Mammary epithelial cell (primary cell): ENCODE measurements at regions of chr1 and their contacts with region 1.

Region 1: GRCh38 chr1:171313835-171314320 is at the start of gene FMO4:
- DNase-seq: peak; percentile 96
- H3K4me3 ChIP-seq: peak within 1 kb of the TSS; percentile 29 to 32 (median 30)
- H3K27ac ChIP-seq: peak within 1 kb of the TSS; percentile 83
- H3K4me1 ChIP-seq: peaks cover 3% of the 10 kb centered on the region
- H3K27me3 ChIP-seq: no peaks in the 10 kb centered on the region
- CTCF ChIP-seq: peak; percentile 74 to 86
- total RNA-seq, gene FMO4: 1.8 to 7.0 TPM

Region 2: DNA sequence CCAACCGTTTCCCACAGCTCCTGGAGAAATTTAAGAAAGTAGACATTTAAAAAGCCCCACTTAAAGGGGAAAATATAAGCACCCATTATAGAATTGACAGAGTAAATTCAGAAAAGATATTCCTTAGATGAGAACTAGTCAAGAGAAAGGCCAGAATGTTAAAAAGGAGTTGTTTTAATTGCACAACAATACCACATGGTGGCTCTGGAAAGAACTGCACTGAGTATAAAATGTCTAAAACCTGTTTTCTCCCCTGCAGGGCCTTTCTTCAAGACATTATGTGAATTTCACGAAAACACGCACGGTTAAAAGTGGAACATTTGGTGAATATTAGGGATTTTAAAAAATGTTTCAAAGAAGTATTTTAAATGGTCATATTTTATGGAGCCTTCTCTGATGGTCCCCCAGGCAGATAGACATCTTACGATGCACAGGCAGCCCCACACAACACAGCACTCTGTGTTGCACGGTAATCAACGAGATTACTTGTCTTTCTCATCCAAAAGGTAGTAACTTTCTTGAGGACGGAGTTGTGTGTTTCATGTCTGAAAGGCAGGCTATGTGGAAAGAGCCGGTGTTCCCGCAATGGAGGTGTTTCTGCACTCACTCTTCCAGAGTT is 548.1 kb before region 1 on chr1:
- CTCF ChIA-PET with region 1: no interaction called
- dilution Hi-C with region 1: no loop called
- in situ Hi-C with region 1: no loop called
- intact Hi-C with region 1: no loop called
- DNase-seq: peak; percentile 8
- H3K4me3 ChIP-seq: no peak overlapping the region
- H3K27ac ChIP-seq: no peak overlapping the region
- H3K4me1 ChIP-seq: no peaks in the 10 kb centered on the region
- H3K27me3 ChIP-seq: no peaks in the 10 kb centered on the region
- CTCF ChIP-seq: peak; percentile 51 to 66

Region 3: DNA sequence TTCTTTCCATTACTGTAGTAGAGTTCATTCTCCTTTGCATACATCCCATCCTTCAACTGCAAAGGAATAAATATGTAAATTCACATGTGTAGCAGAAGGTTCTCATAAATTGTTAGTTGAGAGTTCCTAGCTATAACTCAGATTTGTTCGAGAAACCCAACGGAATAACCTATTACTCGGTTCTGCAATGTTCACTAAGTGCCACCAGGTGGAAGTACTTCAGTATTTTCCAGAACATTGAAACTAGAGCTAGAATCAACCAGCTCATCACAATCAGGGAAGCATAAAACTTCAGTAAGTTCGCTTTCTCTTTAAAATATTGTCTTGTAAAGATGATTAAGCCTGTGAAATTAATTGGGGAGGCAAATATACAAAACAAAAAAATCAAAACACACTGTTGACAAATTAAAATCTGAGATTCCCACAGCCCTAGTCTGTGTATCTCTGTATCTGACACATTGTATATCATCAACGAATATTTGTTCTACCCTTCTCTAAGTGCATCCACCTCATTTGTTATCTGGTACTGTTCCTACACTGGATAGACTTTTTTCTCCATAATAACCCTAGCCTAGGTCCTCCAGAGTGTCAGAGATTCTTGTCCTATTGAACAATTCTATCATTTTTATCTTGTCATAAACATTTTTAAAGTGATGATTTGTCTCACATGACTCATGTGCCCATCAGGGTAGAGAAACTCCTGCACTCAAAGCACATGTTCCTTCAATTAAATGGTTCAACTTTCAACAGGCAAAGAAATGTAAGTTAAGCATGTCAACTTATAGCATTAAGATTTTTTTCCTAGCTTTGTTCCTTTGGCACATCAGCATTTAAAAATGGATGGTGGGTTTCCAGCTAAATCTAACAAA is 346.6 kb before region 1 on chr1:
- CTCF ChIA-PET with region 1: interaction called, 13 read pairs
- dilution Hi-C with region 1: no loop called
- in situ Hi-C with region 1: no loop called
- intact Hi-C with region 1: loop called (anchors 2 kb)
- DNase-seq: peak; percentile 11
- H3K4me3 ChIP-seq: no peak overlapping the region
- H3K27ac ChIP-seq: no peak overlapping the region
- H3K4me1 ChIP-seq: peaks cover 18% of the 10 kb centered on the region
- H3K27me3 ChIP-seq: no peaks in the 10 kb centered on the region
- CTCF ChIP-seq: peak; percentile 54 to 67

Region 4: GRCh38 chr1:171173069-171173468 is 140.8 kb before region 1 on chr1:
- CTCF ChIA-PET with region 1: interaction called, 6 read pairs
- dilution Hi-C with region 1: no loop called
- in situ Hi-C with region 1: no loop called
- intact Hi-C with region 1: loop called (anchors 1 kb)
- DNase-seq: no peak
- H3K4me3 ChIP-seq: no peak overlapping the region
- H3K27ac ChIP-seq: no peak overlapping the region
- H3K4me1 ChIP-seq: no peaks in the 10 kb centered on the region
- H3K27me3 ChIP-seq: no peaks in the 10 kb centered on the region
- CTCF ChIP-seq: no peak

Region 5: DNA sequence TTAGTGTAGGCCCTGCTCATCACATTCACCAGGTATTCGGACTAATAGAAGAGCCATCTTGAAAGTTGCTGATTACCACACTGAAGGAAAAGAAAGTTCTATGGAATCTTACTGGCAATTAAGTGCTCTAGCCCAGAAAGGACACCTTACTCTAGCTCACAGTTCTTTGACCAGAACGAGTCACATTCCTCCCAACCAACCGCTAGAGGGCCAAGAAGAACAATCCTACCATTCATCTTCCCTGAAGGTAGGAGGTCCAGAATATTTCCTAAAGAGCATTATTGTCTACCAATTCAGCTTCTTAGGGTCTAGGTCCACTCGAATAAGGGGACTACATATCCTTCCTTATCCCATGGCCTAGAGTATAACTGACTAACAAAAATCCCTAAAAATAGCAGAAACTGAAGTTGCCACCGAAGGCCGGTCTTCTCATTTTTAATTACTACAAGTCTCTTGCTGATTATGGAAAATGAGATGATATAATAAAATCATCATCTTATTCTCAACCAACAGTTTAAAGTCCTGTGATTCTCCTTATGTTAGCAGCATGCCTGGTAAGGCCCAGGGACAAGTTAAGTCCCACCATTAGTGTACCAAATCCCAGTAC is 68.3 kb before region 1 on chr1:
- CTCF ChIA-PET with region 1: interaction called, 31 read pairs
- dilution Hi-C with region 1: no loop called
- in situ Hi-C with region 1: loop called in 1 of 2 experiments (anchors 10 kb)
- intact Hi-C with region 1: loop called (anchors 1 kb)
- DNase-seq: peak; percentile 39
- H3K4me3 ChIP-seq: no peak overlapping the region
- H3K27ac ChIP-seq: no peak overlapping the region
- H3K4me1 ChIP-seq: no peaks in the 10 kb centered on the region
- H3K27me3 ChIP-seq: no peaks in the 10 kb centered on the region
- CTCF ChIP-seq: peak; percentile 90 to 91

Region 6: DNA sequence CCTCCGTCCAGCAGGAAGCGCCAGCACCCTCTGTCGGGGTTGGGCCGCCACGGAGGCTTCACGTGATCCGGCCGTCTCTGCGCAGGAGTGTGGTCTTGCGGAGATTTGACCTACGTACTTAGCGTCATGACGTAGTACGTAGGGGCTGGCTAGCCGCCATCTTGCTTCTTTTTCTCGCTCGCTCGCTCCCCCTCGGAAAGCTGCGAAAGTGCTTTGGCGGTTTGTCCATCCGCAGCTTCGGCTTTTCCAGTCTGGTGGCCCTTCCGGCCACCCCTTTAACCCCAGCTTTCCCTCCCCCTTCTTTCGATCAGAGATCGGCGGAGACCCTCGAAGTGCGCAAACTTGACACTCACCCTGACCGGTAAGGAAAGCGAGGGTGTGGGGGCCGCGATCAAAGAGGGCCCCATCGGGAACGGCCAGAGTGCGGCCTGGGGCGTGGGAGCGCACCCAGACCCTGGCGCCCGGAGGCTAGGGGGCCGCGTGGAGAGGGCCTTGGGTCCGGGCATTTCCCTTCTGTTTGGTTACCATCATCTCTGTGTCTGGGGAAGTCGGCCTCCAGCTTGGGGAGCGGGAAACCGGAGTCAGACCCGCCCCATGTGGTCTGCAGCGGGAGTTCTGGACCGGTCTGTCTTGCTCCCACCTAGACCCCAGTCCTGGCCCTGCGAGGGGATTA is 171.6 kb after region 1 on chr1 and contains the start of gene PRRC2C:
- CTCF ChIA-PET with region 1: no interaction called
- dilution Hi-C with region 1: no loop called
- in situ Hi-C with region 1: no loop called
- intact Hi-C with region 1: loop called (anchors 2 kb)
- DNase-seq: peak; percentile 95
- H3K4me3 ChIP-seq: peak within 1 kb of the TSS; percentile 79 to 87 (median 80)
- H3K27ac ChIP-seq: peak within 1 kb of the TSS; percentile 95
- H3K4me1 ChIP-seq: peaks cover 13% of the 10 kb centered on the region
- H3K27me3 ChIP-seq: no peaks in the 10 kb centered on the region
- CTCF ChIP-seq: peak; percentile 8 to 80
- total RNA-seq, gene PRRC2C: 56.3 to 177 TPM